Activated CD8-positive, alpha-beta T cell treated with anti-CD3 and anti-CD28 coated beads for 36 hours (primary cell): ENCODE measurements at regions of chrX and their contacts with region 1.

Region 1: GRCh38 chrX:71859637-71860036 is 51.0 kb upstream of the NHSL2 start:
- DNase-seq: peak; percentile 44
- ATAC-seq: peak; percentile 47
- H3K4me3 Mint-ChIP-seq: no peak overlapping the region
- H3K27ac Mint-ChIP-seq: no peak overlapping the region
- H3K4me1 Mint-ChIP-seq: peaks cover 3% of the 10 kb centered on the region
- H3K27me3 Mint-ChIP-seq: peaks cover 8% of the 10 kb centered on the region
- CTCF ChIP-seq: peak; percentile 55

Region 2: DNA sequence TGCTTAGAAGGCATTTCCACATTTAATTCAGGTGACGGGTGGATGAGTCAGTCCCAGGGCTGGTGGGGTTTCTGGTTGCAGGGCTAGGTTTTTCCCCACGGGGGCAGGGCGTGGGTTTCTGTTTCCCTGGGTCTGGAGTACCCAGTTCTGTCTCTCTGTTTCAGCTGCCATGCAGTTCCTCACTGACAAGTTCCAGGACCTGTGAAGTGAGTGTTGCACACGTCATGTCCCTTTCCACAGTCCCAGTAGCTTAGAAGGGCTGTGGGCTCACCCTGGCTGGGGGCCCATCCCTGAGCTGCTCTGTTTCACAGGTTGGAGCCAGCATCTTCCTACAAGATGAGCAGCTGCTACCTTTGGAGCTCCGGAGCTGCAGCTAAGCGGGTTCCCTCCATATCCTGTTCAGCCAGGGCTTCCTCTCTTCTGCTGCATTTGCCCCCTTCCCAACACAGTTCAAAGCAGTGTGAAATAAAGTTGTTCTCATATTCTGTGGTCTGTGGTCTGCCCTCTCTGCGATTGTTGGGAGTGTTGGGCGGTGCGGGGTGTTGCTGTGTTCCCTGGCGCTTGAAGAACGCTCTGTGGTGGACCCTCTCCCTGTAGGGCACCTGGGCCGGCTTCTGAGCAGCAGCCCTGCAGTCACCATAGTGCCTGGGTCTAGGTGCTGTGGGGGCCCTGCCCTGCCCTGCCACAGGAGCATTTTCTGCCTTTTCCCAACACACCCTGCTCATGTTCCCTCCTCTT is 188.4 kb before region 1 on chrX:
- CTCF ChIA-PET with region 1: interaction called, 18 read pairs
- POLR2A ChIA-PET with region 1: no interaction called
- intact Hi-C with region 1: no loop called
- DNase-seq: peak; percentile 65
- ATAC-seq: peak; percentile 66
- H3K4me3 Mint-ChIP-seq: no peak overlapping the region
- H3K27ac Mint-ChIP-seq: peak overlapping the region; percentile 46
- H3K4me1 Mint-ChIP-seq: peaks cover 21% of the 10 kb centered on the region
- H3K27me3 Mint-ChIP-seq: peaks cover 4% of the 10 kb centered on the region
- CTCF ChIP-seq: no peak